Upper lobe of right lung (tissue), 1 donor: ENCODE measurements at regions of chr17 and their contacts with region 1.

Region 1: DNA sequence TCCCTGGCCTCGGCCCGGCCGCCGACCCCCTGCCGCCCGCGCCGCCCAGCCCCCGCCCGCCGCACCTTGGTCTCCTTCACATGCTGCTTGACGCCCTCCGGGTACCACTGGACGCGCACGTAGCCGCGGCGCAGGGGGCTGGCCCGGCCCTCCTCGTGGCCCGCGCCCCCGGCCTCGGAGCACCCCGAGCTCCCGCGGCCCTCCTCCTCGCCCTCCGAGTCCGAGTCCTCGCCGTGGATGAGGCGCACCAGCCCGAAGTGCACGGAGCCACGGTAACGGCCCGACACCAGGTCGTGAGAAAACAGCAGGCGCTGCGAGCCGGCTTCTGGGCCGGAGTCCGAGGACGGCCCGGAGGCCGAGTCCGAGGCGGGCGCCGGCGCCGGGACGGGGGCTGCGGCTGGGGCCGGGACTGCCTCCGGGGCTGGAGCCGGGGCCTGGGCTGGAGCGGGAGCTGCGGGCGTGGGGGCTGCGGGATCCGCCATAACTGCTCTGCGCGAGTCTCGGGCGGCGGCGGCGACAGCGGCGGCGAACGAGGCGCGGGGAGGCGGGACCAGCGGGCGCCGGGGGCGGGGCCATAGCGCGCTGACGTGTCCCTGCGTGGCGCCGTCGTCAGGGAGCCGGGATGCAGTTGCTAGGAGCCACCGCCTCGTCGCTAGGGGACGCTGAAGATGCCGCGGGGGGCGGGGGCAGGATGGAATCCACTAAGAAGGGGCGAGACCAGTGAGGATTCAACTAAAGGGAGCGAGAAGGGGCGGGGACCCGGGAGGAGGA is at the start of gene UBE2O:
- DNase-seq: peak; percentile 95
- ATAC-seq: peak; percentile 99
- H3K4me3 ChIP-seq: peak within 1 kb of the TSS; percentile 91
- H3K27ac ChIP-seq: peak within 1 kb of the TSS; percentile 78
- H3K4me1 ChIP-seq: peaks cover 16% of the 10 kb centered on the region
- H3K27me3 ChIP-seq: no peaks in the 10 kb centered on the region
- CTCF ChIP-seq: peak; percentile 49
- total RNA-seq, gene UBE2O: 19.3 TPM

Region 2: DNA sequence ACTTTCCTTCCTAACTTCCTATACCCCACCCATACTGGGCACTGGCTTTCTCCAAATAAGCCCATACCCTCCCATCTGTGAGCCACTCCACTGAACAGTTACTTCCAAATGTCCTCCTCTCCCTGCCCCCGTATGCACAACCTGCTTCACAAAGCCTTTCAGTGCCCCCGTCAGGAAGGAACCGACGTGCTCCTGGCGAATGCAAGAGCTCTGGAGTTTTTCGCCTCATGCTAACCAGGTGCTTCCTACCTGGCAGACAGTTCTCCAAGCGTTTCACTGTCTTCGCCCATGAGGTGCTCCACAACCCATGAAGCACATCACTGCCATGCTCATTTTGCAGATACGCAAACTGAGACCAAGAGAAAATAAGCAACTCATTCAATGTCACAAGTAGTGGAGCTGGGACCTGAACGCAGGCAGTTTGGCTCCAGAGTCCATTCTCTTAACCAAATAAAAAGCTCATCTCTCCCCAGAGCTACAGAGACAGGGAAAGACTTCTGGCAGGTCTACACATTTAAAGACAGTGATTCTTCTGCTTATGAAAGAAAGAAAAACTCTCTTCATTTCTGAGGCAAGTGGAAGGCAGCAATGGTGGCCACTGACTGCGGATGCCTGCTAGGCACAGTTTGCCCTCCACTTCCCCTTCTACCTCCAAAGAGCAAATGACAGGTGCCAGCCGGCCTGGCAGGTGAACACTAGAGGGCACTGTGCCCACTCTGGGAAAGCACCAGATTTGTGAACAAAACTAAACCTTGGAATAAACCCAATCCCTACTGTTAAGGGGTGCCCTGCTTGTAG is 44.6 kb before region 1 on chr17:
- intact Hi-C with region 1: loop called (anchors 10 kb)
- DNase-seq: peak; percentile 81
- ATAC-seq: peak; percentile 77
- H3K4me3 ChIP-seq: no peak overlapping the region
- H3K27ac ChIP-seq: no peak overlapping the region
- H3K4me1 ChIP-seq: peaks cover 6% of the 10 kb centered on the region
- H3K27me3 ChIP-seq: no peaks in the 10 kb centered on the region
- CTCF ChIP-seq: peak; percentile 85